Activated CD4-positive, alpha-beta memory T cell treated with anti-CD3 and anti-CD28 coated beads, Interleukin-2, amount 10 ng/mL, durations not matched to agents 7 days and 5 days (primary cell): ENCODE measurements at regions of chr5 and their contacts with region 1.

Region 1: DNA sequence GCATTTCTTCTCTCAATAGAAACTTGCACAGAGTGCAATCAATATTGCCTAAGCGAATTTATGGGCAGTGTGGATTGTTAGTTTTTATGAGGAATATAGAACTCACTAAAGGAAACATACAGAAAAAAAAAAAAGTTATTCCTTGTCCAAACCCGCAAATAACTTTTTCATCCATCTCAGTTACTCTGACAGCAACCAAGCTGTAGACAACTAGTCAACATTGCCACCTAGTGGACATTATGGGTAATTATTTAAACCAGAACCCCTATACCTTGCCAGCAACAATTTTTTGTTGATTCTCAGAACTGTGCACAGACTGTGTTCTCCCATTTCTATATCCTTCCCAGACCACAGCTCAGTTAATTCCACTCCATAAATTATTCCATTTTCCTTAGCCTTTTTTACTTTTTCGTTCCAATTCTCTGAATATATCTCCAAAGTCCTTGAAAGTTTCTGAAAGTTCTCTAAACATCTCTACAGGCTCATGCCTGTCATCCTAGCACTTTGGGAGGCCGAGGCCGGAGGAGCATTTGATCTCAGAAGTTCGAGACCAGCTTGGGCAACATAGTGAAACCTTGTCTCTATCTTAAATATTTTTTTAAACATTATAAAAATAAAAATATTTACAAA is 2.6 kb upstream of the AFAP1L1 start:
- DNase-seq: no peak
- H3K4me3 Mint-ChIP-seq: no peak overlapping the region
- H3K27ac Mint-ChIP-seq: no peak overlapping the region
- H3K4me1 Mint-ChIP-seq: peaks cover 11% of the 10 kb centered on the region
- H3K27me3 Mint-ChIP-seq: peaks cover 40% of the 10 kb centered on the region

Region 2: DNA sequence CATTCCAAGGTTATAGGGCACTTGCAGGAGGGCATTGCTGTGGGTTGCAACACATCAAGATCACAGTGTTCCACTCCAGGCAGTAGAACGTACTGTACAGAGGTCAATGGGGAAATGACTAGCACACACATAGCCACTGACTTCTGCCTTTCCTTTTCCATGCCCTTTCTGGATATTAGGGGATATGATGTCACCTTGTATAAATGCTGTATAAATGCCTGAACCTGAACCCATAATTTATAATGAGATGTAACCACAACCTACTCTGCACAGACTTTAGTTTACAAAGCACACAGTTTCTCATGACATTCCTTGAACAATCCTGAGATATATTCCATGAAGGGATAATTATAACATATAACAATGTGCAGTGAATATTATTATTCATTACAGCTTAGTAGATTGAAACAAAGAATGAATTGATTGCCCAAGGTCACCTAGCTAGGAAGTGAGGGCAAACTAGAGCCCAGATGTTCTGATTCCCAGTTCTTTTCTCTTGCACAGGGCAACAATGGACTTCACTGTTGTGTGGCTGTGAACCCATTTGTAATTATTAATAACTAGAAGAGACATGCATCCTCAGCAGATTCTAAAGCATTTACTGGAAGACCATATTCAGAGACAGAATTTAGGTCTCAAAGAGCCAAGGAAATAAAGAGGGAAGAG is 133.4 kb before region 1 on chr5:
- CTCF ChIA-PET with region 1: interaction called, 56 read pairs
- POLR2A ChIA-PET with region 1: no interaction called
- DNase-seq: no peak
- H3K4me3 Mint-ChIP-seq: no peak overlapping the region
- H3K27ac Mint-ChIP-seq: no peak overlapping the region
- H3K4me1 Mint-ChIP-seq: no peaks in the 10 kb centered on the region
- H3K27me3 Mint-ChIP-seq: peaks cover 35% of the 10 kb centered on the region

Region 3: DNA sequence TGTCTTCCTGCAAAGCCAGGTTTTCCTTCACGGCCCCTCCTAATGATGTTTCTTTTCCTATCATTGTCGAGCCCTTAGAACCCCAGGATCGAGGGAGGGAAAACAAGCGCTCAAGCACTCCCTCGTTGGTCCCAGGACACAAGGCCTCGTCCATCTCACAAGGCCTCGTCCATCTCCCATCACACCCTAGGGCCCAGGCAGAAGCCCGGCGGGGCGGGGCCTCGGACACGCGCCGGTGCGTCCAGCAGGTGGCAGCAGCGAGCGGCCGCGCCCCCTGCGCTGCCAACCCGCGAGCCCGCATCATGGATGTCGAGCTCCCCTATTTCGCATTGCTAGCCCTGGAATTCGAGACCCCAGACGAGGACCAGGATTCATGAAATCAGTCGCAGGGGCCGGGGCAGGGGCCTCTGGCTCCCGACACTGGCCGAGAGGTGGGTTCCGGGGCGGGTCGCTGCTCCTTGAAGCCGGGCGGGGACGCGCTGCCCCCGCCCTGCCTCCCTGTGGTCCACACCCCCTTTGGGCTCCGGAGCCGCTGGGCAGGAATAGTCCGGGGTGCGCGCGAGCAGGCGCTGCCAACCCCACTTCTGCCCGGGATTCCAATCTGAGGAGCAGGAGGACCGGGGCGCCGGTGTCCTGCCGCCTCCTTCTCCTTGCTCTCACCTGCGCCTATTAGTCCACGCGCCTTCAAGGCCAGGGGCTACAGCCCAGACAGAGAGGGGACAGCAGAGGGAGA is 127.7 kb before region 1 on chr5 and contains the start of gene ABLIM3:
- CTCF ChIA-PET with region 1: interaction called, 56 read pairs
- POLR2A ChIA-PET with region 1: no interaction called
- DNase-seq: peak; percentile 75
- H3K4me3 Mint-ChIP-seq: peak within 1 kb of the TSS; percentile 28
- H3K27ac Mint-ChIP-seq: no peak within 1 kb of the TSS
- H3K4me1 Mint-ChIP-seq: peaks cover 3% of the 10 kb centered on the region
- H3K27me3 Mint-ChIP-seq: peaks cover 34% of the 10 kb centered on the region
- total RNA-seq, gene ABLIM3: 0.08 to 0.38 TPM

Region 4: DNA sequence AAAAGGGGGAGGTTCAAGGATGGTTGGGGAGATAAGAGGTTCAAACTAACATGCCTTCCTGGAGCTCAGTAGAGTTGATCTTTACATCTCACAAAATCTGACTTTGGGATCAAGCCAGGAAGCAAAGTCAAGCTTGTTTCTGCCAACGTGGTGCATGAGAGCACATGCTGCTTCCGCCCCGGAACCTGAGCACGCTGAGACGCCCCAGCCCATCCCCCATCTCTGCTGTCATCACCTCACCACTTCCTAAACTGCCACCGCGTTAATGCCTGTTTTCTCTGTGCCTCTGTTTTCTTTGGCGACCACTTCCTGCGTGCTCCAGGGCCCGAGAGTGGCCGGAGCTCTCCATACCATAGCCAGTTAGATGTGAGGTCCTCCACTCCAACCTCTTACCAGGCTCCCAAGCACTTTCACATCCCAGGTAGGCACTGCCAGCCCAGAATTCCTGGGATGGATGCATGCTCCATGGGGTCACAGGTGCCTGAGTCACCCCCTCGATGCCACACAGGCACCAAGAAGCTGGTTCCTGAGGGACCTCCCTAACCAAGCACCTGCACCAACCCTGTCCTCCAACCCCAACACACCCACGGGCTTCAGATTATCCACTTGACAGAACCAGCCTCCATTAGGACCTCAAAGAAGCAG is 28.6 kb before region 1 on chr5:
- CTCF ChIA-PET with region 1: interaction called, 12 read pairs
- POLR2A ChIA-PET with region 1: interaction called, 3 read pairs
- DNase-seq: peak; percentile 94
- H3K4me3 Mint-ChIP-seq: peak overlapping the region; percentile 24
- H3K27ac Mint-ChIP-seq: peak overlapping the region; percentile 85
- H3K4me1 Mint-ChIP-seq: peaks cover 36% of the 10 kb centered on the region
- H3K27me3 Mint-ChIP-seq: peaks cover 13% of the 10 kb centered on the region

Region 5: GRCh38 chr5:149357370-149358293 is 88.6 kb after region 1 on chr5 and contains the start of gene PCYOX1L:
- CTCF ChIA-PET with region 1: no interaction called
- POLR2A ChIA-PET with region 1: no interaction called
- DNase-seq: peak; percentile 94
- H3K4me3 Mint-ChIP-seq: peak within 1 kb of the TSS; percentile 92
- H3K27ac Mint-ChIP-seq: peak within 1 kb of the TSS; percentile 85
- H3K4me1 Mint-ChIP-seq: peaks cover 71% of the 10 kb centered on the region
- H3K27me3 Mint-ChIP-seq: no peaks in the 10 kb centered on the region
- total RNA-seq, gene PCYOX1L: 41.2 to 42.1 TPM